ENCODE measurements at regions of chr12 and their contacts with region 1.

Region 1: GRCh38 chr12:46459861-46460545 is 87.4 kb upstream of the SLC38A2 start:
- DNase-seq: no peak
- H3K4me3 ChIP-seq: no peak overlapping the region
- H3K27ac ChIP-seq: no peak overlapping the region
- H3K4me1 ChIP-seq: no peaks in the 10 kb centered on the region
- H3K27me3 ChIP-seq: no peaks in the 10 kb centered on the region
- CTCF ChIP-seq: no peak
- POLR2A ChIP-seq: no peak

Region 2: GRCh38 chr12:45458854-45459807 is 1000.9 kb before region 1 on chr12:
- intact Hi-C with region 1: no loop called
- DNase-seq: no peak
- H3K4me3 ChIP-seq: no peak overlapping the region
- H3K27ac ChIP-seq: no peak overlapping the region
- H3K4me1 ChIP-seq: no peaks in the 10 kb centered on the region
- H3K27me3 ChIP-seq: no peaks in the 10 kb centered on the region
- CTCF ChIP-seq: no peak
- POLR2A ChIP-seq: no peak

Region 3: GRCh38 chr12:45803652-45804594 is 656.1 kb before region 1 on chr12:
- intact Hi-C with region 1: loop called (anchors 5 kb)
- DNase-seq: no peak
- H3K4me3 ChIP-seq: no peak overlapping the region
- H3K27ac ChIP-seq: no peak overlapping the region
- H3K4me1 ChIP-seq: no peaks in the 10 kb centered on the region
- H3K27me3 ChIP-seq: no peaks in the 10 kb centered on the region
- CTCF ChIP-seq: no peak
- POLR2A ChIP-seq: no peak

Region 4: DNA sequence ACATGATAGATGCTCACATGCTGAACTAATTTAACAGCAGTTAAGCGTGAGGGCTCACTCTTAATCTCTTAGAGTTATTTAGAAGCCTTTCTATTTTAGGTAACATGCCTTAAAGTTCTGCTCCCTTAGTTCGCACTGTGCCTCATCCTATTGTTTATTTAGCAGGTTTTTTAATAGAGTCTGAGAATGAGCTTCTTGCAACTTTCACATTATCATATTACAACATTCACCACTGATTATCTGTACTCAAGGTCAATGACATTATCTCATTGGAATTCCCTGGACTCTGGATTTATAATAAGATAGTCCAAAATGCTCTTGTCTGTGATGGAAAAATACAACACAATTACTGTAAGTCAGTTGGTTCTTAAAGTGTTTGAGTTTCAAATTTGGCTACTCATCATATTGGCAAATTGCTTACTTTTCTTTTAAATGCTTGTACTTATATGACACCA is 96.1 kb after region 1 on chr12:
- intact Hi-C with region 1: no loop called
- DNase-seq: no peak
- H3K4me3 ChIP-seq: no peak overlapping the region
- H3K27ac ChIP-seq: peak overlapping the region; percentile 54 to 71
- H3K4me1 ChIP-seq: no peaks in the 10 kb centered on the region
- H3K27me3 ChIP-seq: no peaks in the 10 kb centered on the region
- CTCF ChIP-seq: no peak
- POLR2A ChIP-seq: no peak